GM10248 (cell line): ENCODE measurements at regions of chr2 and their contacts with region 1.

Region 1: GRCh38 chr2:134118279-134119116 is 135.4 kb upstream of the MGAT5 start:
- DNase-seq: peak; percentile 72
- CTCF ChIP-seq: peak; percentile 69

Region 2: GRCh38 chr2:134148843-134149472 is 30.5 kb after region 1 on chr2:
- CTCF ChIA-PET with region 1: interaction called, 13 read pairs
- POLR2A ChIA-PET with region 1: no interaction called
- DNase-seq: no peak
- CTCF ChIP-seq: no peak

Region 3: GRCh38 chr2:134207564-134208209 is 89.2 kb after region 1 on chr2:
- CTCF ChIA-PET with region 1: interaction called, 110 read pairs
- POLR2A ChIA-PET with region 1: interaction called, 3 read pairs
- DNase-seq: peak; percentile 44
- CTCF ChIP-seq: peak; percentile 73

Region 4: DNA sequence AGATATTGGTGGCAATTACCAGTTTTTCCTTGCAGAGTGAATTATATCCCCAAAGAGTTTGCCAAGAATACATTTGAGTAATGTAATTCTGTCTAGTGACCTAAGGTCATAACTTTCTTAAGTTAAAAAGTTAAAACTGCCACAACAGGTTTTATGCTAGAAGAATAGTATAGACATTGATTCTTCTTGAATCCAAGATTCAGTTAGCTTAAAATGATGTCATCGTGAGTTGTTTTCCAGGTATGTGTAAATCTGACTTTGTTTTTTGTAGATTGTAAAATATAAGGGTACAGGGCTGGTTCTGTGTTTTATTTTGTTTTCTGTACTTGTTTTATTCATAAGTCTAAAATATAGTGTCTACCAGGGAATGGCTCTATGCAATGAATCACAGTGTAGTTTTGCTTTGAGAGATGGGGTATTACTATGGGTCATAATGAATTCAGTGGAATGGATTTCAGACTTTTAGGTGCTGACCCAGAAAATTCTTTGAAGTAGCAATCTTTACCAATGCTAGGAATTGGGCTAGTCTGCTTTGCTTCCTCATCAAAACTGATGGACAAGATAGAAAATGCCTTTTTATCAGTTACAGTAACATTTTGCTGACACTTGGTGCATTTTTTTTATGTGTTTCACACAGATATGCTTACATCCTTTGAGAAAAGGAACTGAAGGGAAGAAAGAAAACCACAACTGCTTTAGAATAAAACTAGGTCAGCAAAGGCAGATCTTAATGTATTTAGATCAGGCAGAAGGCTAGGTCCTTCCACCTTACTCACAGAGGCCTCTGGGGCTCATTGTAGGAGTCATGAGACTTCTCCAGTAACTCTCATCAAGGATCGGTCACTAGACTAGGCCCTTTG is 114.6 kb after region 1 on chr2:
- CTCF ChIA-PET with region 1: interaction called, 10 read pairs
- POLR2A ChIA-PET with region 1: no interaction called
- DNase-seq: no peak
- CTCF ChIP-seq: no peak

Region 5: GRCh38 chr2:134348239-134348638 is 229.7 kb after region 1 on chr2:
- CTCF ChIA-PET with region 1: interaction called, 17 read pairs
- POLR2A ChIA-PET with region 1: no interaction called
- DNase-seq: no peak
- CTCF ChIP-seq: no peak

Region 6: GRCh38 chr2:134453973-134454372 is 335.5 kb after region 1 on chr2:
- CTCF ChIA-PET with region 1: interaction called, 49 read pairs
- POLR2A ChIA-PET with region 1: no interaction called
- DNase-seq: no peak
- CTCF ChIP-seq: no peak

Region 7: DNA sequence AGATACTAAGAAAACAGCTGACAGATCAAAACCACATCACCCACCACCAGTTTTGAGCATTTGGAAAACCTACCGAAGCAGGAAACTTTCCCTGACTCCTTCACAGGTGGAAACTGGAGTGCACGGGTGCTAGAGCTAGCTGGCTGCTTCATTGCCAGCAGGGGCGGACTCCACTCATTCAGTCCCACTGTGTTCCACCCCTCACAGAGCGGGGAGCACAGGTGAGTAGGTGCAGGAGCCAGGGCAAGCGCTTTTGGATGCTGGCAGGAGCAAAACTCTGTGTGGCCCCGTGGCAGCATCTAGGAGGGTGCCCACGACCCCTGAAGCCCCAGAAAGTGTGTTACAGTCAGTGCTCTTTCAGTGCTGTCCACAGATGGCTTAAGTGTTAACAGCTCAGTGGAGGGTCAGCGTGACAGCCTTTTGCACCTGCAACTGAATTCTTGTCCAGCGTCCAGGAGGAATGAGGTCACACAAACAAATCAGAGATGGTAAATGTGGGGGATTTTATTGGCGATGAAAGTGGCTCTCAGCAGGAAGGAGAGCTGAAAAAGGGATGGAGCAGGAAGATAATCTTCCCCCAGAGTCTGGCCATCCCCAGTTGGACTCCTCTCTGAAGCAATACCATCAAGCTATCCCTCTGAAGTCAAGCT is 529.2 kb after region 1 on chr2:
- CTCF ChIA-PET with region 1: no interaction called
- POLR2A ChIA-PET with region 1: no interaction called
- DNase-seq: no peak
- CTCF ChIP-seq: no peak